Left lung (tissue), 14 donors: ENCODE measurements at regions of chr3 and their contacts with region 1.

Region 1: GRCh38 chr3:98329392-98330124 is 24.1 kb upstream of the OR5K4 start:
- DNase-seq: peak in 2 of 4 donors; percentile 32 to 60
- ATAC-seq: peak; percentile 88
- H3K4me3 ChIP-seq: no peak overlapping the region
- H3K27ac ChIP-seq: no peak overlapping the region
- H3K4me1 ChIP-seq: no peaks in the 10 kb centered on the region
- H3K27me3 ChIP-seq: peaks cover 0 to 9% of the 10 kb centered on the region in 2 donors
- CTCF ChIP-seq: peak; percentile 33 to 77

Region 2: DNA sequence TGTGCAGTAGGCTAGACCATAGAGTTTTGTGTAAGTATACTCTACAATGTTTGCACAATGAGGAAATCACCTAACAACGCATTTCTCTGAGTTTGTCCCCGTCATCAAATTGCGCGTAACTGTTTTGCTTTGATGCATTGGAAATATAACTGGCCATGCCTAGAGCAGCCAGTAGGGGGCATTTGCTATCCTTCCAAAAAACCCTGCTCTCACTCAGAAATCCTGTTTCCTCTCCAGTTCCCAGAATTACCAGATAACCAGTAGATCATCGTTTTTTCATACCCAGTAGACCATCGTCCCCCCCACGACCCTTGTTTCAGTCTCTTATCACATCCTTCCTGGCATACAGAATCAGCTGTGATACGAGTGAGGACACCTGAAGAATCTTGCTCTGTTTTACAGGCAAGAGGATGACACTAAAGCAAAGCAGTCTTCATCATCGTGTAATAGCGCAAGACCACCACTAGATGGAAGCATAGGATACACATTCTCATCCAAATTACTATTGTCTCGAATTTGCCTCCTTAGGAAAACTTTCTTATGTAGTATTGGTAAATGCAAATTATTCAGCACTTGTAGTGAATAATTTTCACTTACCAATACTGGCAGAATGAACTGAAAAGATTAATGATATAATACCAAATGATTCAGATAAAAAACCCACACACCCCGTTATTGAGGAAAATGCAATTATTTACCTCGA is 290.1 kb before region 1 on chr3:
- intact Hi-C with region 1: loop called in 1 of 2 experiments (anchors 2 kb)
- DNase-seq: peak in 2 of 4 donors; percentile 81 to 83
- ATAC-seq: peak; percentile 100
- H3K4me3 ChIP-seq: peak overlapping the region in 1 of 2 donors; percentile 17
- H3K27ac ChIP-seq: no peak overlapping the region
- H3K4me1 ChIP-seq: no peaks in the 10 kb centered on the region
- H3K27me3 ChIP-seq: peaks cover 0 to 28% of the 10 kb centered on the region in 2 donors
- CTCF ChIP-seq: peak; percentile 85 to 88

Region 3: DNA sequence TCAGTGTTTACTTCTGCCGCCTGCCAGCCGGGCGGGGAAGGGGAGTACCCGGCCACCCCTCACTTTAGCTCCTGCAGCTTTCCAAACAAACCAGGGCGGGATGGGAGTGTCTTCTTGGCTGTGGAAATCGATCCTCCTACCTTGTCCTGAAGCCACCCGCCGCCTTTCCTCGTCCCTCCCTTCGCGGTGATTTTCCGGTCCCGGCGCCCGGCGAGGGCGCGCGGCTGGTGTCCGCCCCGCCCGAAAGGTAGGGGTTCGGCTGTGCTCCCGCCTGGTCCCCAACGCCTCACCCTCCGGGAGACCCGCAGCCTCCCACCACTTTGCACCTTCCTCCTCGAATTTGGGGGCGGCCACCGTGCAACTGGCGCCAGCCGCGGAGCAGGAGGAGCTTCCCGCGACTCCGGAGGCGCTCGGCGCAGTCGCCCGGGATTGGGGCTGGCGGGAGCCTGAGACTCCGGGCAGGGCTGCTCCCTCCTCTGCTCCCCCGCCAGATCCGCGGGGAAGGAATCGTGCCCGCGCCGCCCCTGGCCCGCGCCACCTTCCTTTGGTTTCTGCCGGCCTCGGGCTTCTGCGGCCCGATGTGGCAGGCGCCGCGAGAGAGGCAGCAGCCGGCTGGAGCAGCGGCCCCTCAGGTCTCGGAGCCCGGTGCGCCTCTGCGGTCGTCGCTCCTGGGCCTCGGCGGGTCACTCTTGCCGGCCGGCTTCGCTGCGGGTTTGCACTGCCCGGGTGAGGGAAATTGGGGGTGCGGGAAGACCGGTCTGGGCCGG is 402.9 kb after region 1 on chr3:
- intact Hi-C with region 1: no loop called
- DNase-seq: peak; percentile 43 to 90 (median 58)
- ATAC-seq: peak; percentile 77
- H3K4me3 ChIP-seq: peak overlapping the region; percentile 73 to 78
- H3K27ac ChIP-seq: peak overlapping the region; percentile 72 to 73
- H3K4me1 ChIP-seq: peaks cover 7 to 21% of the 10 kb centered on the region in 2 donors
- H3K27me3 ChIP-seq: peaks cover 0 to 40% of the 10 kb centered on the region in 2 donors
- CTCF ChIP-seq: no peak